ENCODE measurements at regions of chr22 and their contacts with region 1.

Region 1: GRCh38 chr22:20916983-20917810 is at the start of gene CRKL:
- DNase-seq: peak; percentile 80
- H3K4me3 ChIP-seq: peak within 1 kb of the TSS; percentile 97
- H3K27me3 ChIP-seq: no peaks in the 10 kb centered on the region
- CTCF ChIP-seq: peak; percentile 91
- polyA plus RNA-seq, gene CRKL: 14.7 and 21.4 TPM in 2 replicates

Region 2: DNA sequence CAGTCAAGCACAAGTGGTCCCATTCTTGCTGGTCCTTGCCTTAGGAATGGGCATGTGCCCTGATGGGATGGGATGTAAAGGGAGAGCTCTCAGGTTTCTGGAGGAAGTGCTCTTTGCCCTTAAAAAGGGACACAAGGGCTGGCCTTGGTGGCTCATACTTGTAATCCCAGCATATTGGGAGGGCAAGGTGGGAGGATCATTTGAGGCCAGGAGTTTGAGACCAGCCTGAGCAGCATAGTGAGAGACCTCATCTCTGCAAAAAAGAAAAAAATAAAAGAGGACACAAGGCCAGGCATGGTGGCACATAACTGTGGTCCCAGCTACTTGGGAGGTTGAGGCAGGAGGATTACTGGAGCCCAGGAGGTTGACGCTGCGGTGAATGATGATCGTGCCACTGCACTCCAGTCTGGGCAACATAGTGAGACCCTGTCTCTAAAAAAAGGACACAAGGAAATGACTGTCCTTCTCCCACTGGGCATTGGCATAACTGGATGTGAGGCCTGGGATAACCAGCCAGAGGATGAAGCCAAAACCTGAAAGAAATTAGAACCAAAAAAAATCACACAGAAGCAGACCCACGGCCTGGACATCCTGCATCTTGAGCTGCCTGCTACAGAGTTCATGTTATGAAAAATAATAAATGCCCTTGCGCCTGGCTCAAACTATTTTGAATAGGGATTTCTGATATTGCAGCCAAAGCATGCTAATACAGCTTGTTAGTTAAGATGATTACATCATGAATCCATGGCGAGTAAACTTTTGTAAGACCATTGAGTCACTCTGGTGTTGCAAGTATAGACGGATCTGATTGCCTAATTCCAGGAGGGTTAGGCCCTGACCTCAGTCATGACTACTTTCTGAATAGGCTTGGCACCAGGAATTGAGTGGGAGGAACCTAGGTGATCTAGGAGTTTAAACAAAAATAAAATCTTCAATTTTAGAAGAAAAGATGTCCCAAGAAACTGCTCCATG is 12.9 kb before region 1 on chr22:
- CTCF ChIA-PET with region 1: interaction called, 12 read pairs
- POLR2A ChIA-PET with region 1: no interaction called
- DNase-seq: peak; percentile 85
- H3K4me3 ChIP-seq: no peak overlapping the region
- H3K27me3 ChIP-seq: no peaks in the 10 kb centered on the region
- CTCF ChIP-seq: no peak

Region 3: GRCh38 chr22:20957316-20958101 is 40.3 kb after region 1 on chr22:
- CTCF ChIA-PET with region 1: interaction called, 10 read pairs
- POLR2A ChIA-PET with region 1: no interaction called
- DNase-seq: no peak
- H3K4me3 ChIP-seq: peak overlapping the region; percentile 63
- H3K27me3 ChIP-seq: no peaks in the 10 kb centered on the region
- CTCF ChIP-seq: 0 out of 2 replicates have a peak, but pooled peaks have one; percentile 3

Region 4: DNA sequence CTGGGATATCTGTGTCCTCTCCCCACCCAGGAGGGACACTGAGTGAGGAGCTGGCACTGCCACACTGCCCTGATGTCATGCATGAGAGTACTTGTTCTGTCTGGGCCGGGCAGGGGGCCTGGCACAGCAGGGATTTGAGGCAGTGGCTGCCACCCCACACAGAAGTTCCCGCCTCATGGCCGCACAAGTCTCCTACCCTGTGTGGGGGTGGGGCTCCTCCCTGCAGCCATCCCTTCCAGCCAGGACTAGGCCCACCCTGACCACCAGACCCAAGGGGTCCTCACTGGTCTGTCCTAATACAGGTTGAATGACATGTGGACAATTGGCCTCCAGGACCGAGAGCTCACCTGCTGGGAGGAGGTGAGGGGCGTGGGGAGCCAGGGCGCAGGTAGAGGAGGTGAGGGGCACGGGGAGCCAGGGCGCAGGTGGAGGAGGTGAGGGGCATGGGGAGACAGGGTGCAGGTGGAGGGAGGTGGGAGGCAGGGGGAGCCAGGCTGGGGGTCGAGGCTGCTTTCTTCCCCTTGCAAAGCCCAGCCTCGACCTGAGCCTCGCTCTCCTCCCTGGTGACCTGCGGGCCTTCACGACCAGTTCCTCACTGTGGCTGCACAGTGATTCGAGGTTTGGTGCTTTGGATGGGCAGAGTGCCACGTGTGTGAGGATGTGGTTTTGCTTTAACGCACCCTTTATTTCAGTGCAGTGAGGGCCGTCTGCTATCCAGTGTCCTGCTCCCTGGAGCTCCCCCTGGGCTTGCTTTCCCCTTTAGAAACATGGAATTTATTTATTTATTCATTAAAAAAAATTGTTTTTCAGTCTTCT is 72.3 kb after region 1 on chr22:
- CTCF ChIA-PET with region 1: no interaction called
- POLR2A ChIA-PET with region 1: no interaction called
- DNase-seq: no peak
- H3K4me3 ChIP-seq: no peak overlapping the region
- H3K27me3 ChIP-seq: no peaks in the 10 kb centered on the region
- CTCF ChIP-seq: no peak